Breast epithelium (tissue), 4 donors: ENCODE measurements at regions of chr14 and their contacts with region 1.

Region 1: GRCh38 chr14:33040372-33041140 is 101.9 kb downstream of the NPAS3 start:
- DNase-seq: no peak
- H3K4me3 ChIP-seq: no peak overlapping the region
- H3K27ac ChIP-seq: no peak overlapping the region
- H3K4me1 ChIP-seq: no peaks in the 10 kb centered on the region
- H3K27me3 ChIP-seq: no peaks in the 10 kb centered on the region
- CTCF ChIP-seq: no peak
- POLR2A ChIP-seq: no peak

Region 2: GRCh38 chr14:34580381-34580780 is 1539.8 kb after region 1 on chr14:
- intact Hi-C with region 1: loop called (anchors 10 kb)
- DNase-seq: no peak
- H3K4me3 ChIP-seq: no peak overlapping the region
- H3K27ac ChIP-seq: no peak overlapping the region
- H3K4me1 ChIP-seq: no peaks in the 10 kb centered on the region
- H3K27me3 ChIP-seq: no peaks in the 10 kb centered on the region
- CTCF ChIP-seq: no peak
- POLR2A ChIP-seq: no peak